Activated T-helper 2 cell treated with anti-CD3 and anti-CD28 coated beads, Interferon-gamma antibody, Interleukin-2, Interleukin-4, amounts not matched to agents 10 μg/mL and 5 μg/mL and 100 μg/mL, durations not matched to agents 14 hours and 24 hours and 36 hours (primary cell): ENCODE measurements at regions of chr5 and their contacts with region 1.

Region 1: GRCh38 chr5:121976979-121977378 is 15.2 kb downstream of the SRFBP1 start:
- DNase-seq: no peak
- H3K4me3 Mint-ChIP-seq: no peak overlapping the region
- H3K27ac Mint-ChIP-seq: no peak overlapping the region
- H3K4me1 Mint-ChIP-seq: peaks cover 13% of the 10 kb centered on the region
- H3K27me3 Mint-ChIP-seq: no peaks in the 10 kb centered on the region

Region 2: GRCh38 chr5:122009436-122009835 is 32.5 kb after region 1 on chr5:
- intact Hi-C with region 1: loop called (anchors 2 kb)
- DNase-seq: no peak
- H3K4me3 Mint-ChIP-seq: no peak overlapping the region
- H3K27ac Mint-ChIP-seq: peak overlapping the region; percentile 13
- H3K4me1 Mint-ChIP-seq: peaks cover 10% of the 10 kb centered on the region
- H3K27me3 Mint-ChIP-seq: no peaks in the 10 kb centered on the region

Region 3: GRCh38 chr5:122019919-122020590 is 43.1 kb after region 1 on chr5:
- intact Hi-C with region 1: loop called (anchors 1 kb)
- DNase-seq: no peak
- H3K4me3 Mint-ChIP-seq: peak overlapping the region; percentile 26
- H3K27ac Mint-ChIP-seq: peak overlapping the region; percentile 63
- H3K4me1 Mint-ChIP-seq: peaks cover 8% of the 10 kb centered on the region
- H3K27me3 Mint-ChIP-seq: no peaks in the 10 kb centered on the region

Region 4: DNA sequence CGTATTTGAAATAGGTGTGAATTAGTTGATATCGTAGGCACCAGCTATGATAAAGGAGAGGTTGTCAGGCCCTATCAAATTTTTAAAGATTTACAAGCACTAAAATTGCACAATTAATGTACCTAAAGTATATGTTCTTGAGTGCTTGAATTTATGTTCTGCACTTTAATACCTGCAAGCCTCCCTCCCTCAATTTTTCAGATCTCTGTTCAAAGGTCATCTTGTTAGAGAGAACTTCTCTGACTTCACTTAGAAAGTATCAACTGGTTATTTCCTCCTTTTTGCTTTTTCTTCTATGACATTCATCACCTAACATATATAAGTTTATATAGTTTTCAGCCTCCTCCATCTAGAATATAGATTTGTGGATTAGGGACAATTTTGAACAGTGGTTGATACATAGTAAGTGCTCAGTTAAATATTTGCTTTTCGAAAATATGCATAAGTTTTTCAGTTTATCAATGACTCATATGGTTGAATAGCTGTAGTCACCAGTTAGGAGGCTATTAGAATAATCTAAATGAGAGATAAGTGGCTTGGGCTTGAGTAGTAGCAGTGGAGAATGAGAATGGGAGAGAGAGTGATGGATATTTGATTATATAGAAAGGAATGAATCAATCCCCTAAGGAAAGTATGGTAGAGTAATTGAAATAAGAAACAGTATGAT is 63.8 kb after region 1 on chr5:
- intact Hi-C with region 1: no loop called
- DNase-seq: no peak
- H3K4me3 Mint-ChIP-seq: no peak overlapping the region
- H3K27ac Mint-ChIP-seq: no peak overlapping the region
- H3K4me1 Mint-ChIP-seq: no peaks in the 10 kb centered on the region
- H3K27me3 Mint-ChIP-seq: no peaks in the 10 kb centered on the region